Caco-2 (cell line): ENCODE measurements at regions of chr17 and their contacts with region 1.

Region 1: DNA sequence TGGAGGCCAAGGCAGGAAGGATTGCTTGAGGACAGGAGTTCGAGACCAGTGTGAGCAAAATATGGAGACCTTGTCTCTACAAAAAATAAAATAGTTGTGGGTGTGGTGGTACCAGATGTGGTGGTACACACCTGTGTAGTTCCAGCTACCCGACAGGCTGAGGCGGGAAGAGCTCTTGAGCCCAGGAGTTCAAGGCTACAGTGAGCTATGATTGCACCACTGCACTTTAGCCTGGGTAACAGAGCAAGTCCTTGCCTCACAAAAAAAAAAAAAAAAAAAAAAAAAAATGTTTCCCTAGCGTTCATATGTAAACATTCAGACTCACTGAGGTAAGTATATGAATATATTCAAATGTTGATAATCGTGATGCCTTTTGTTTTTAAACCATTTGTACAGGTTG is 39.5 kb downstream of the CLUH start:
- DNase-seq: no peak
- H3K4me3 ChIP-seq: no peak overlapping the region
- H3K4me3 Mint-ChIP-seq: no peak overlapping the region
- H3K27ac Mint-ChIP-seq: no peak overlapping the region
- H3K4me1 ChIP-seq: no peaks in the 10 kb centered on the region
- H3K4me1 Mint-ChIP-seq: no peaks in the 10 kb centered on the region
- H3K27me3 ChIP-seq: no peaks in the 10 kb centered on the region
- H3K27me3 Mint-ChIP-seq: no peaks in the 10 kb centered on the region
- CTCF ChIP-seq: no peak

Region 2: DNA sequence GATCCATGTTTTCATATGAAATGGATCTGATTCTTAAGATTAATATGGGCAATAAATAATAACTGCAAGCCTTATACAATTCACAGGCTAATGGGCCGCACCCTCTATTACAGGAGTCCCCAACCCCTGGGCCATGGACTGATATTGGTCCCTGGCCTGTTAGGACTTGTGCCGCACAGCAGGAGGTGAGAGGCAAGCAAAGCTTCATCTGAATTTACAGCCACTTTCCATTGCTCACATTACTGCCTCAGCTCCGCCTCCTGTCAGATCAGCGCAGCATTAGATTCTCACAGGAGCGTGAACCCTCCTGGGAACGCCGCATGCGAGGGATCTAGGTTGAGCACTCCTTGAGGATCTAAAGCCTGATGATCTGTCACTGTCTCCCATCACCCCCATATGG is 187.2 kb before region 1 on chr17:
- CTCF ChIA-PET with region 1: no interaction called
- POLR2A ChIA-PET with region 1: no interaction called
- intact Hi-C with region 1: loop called (anchors 1 kb)
- DNase-seq: no peak
- H3K4me3 ChIP-seq: no peak overlapping the region
- H3K4me3 Mint-ChIP-seq: no peak overlapping the region
- H3K27ac Mint-ChIP-seq: peak overlapping the region; percentile 61
- H3K4me1 ChIP-seq: peaks cover 8% of the 10 kb centered on the region
- H3K4me1 Mint-ChIP-seq: peaks cover 23% of the 10 kb centered on the region
- H3K27me3 ChIP-seq: no peaks in the 10 kb centered on the region
- H3K27me3 Mint-ChIP-seq: no peaks in the 10 kb centered on the region
- CTCF ChIP-seq: no peak

Region 3: DNA sequence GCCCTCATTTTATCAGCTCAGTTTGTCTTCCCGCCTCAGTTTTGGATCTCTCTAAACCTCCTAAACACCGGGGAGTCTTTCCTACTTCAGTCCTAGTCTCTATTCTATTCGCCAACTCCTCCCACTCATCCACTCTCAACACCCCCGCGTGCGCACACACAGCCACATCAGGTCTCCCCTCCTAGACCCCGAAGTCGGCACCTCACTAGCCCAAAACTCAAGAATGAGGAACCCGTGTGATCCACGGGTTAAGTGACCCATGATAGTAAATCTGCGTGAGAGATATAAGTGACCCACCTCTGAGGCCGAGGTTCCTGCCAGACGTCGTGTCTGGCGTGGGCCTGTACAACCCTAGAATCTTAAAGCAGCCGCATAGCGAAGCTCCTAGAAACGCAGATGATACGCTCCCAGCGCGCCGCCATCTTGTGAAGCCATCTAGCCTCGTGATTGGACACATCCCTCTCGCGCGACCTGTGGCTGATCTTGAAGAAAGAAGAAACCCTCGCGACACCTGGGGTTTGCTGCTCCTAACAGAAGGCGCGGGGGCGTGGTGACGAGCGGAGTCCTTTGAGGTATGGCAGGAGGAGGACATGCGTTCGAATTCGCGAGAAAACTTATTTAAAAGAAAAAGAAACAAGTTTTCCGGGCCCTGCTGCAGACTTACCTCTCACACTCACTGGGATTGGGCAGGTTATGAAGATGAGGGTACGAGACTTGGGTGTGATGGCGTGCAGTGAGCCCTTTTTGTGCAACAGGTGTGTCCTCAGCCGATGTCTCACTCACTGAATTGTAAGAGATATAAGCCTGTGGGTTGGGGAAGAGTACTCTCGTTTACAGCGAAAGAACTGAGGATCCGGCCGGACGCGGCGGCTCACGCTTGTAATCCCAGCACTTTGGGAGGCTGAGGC is 160.3 kb before region 1 on chr17 and contains the start of gene METTL16:
- CTCF ChIA-PET with region 1: no interaction called
- POLR2A ChIA-PET with region 1: no interaction called
- intact Hi-C with region 1: loop called (anchors 1 kb)
- DNase-seq: peak; percentile 98 to 99
- H3K4me3 ChIP-seq: peak within 1 kb of the TSS; percentile 53
- H3K4me3 Mint-ChIP-seq: no peak within 1 kb of the TSS
- H3K27ac Mint-ChIP-seq: no peak within 1 kb of the TSS
- H3K4me1 ChIP-seq: peaks cover 7% of the 10 kb centered on the region
- H3K4me1 Mint-ChIP-seq: peaks cover 12% of the 10 kb centered on the region
- H3K27me3 ChIP-seq: no peaks in the 10 kb centered on the region
- H3K27me3 Mint-ChIP-seq: no peaks in the 10 kb centered on the region
- CTCF ChIP-seq: no peak
- total RNA-seq, gene METTL16: 50.4 and 58.4 TPM in 2 replicates

Region 4: DNA sequence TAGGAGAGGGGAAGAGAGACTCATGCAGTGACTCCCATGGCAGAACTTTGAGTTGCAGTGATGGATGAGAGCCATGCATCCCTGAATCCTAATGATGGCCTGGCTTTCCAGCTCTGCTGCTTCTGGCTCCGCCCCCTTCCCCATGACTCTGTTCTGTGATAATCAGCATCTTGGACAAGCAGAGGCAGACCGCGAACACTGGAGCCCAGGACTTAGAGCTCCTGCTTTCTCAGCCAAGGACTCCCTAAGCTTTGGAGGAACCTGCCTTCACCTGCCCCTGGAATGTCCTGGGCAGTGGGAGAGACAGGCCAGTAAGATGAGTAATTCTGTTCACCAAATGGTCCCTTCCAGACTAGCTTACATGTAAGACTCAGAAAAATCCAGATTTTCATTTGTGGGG is 64.9 kb after region 1 on chr17:
- CTCF ChIA-PET with region 1: no interaction called
- POLR2A ChIA-PET with region 1: no interaction called
- intact Hi-C with region 1: no loop called
- DNase-seq: no peak
- H3K4me3 ChIP-seq: no peak overlapping the region
- H3K4me3 Mint-ChIP-seq: no peak overlapping the region
- H3K27ac Mint-ChIP-seq: no peak overlapping the region
- H3K4me1 ChIP-seq: no peaks in the 10 kb centered on the region
- H3K4me1 Mint-ChIP-seq: no peaks in the 10 kb centered on the region
- H3K27me3 ChIP-seq: no peaks in the 10 kb centered on the region
- H3K27me3 Mint-ChIP-seq: peaks cover 6% of the 10 kb centered on the region
- CTCF ChIP-seq: no peak